Spleen (tissue), 13 donors: ENCODE measurements at regions of chr20 and their contacts with region 1.

Region 1: DNA sequence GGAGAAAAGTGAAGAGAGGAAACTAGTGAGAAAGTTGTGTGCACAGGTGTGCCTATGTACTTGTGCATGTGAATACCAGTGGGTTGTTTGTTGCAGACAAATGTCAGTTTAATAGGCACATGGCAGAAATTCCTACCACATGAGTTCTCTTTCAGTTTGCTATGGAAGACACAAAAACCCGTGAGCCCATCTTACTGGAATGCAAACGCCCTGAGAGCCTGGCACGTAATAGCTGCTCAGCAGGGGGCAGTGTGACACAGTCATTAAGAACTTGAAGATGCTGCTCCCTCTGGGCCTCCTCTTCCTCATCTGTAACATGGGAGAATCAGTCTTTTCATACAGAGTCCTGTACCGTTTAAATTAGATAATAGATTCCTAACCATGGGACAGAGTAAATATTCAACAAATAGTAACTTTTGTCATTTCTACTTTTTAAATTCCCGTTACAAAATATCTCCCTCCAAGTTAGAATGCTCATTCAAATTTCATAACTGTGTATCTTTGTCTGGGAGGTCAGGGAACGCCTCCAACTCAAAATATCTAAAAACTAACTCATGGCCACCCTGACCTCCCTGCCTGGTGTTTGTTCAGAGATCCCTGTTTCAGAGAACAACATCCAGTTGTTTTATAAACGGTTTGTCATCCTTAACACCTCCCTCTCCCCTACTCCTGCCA is 802.9 kb downstream of the MAFB start:
- DNase-seq: no peak
- H3K4me3 ChIP-seq: no peak overlapping the region
- H3K27ac ChIP-seq: peak overlapping the region in 1 of 8 donors; percentile 6
- H3K4me1 ChIP-seq: peaks cover 0 to 14% (median 3%) of the 10 kb centered on the region in 6 donors
- H3K27me3 ChIP-seq: no peaks in the 10 kb centered on the region
- CTCF ChIP-seq: peak in 10 of 11 experiments; percentile 30 to 81 (median 62)
- POLR2A ChIP-seq: no peak

Region 2: GRCh38 chr20:39234520-39235095 is 651.5 kb before region 1 on chr20:
- intact Hi-C with region 1: no loop called
- DNase-seq: no peak
- H3K4me3 ChIP-seq: no peak overlapping the region
- H3K27ac ChIP-seq: no peak overlapping the region
- H3K4me1 ChIP-seq: no peaks in the 10 kb centered on the region
- H3K27me3 ChIP-seq: peaks cover 0 to 6% (median 0%) of the 10 kb centered on the region in 7 donors
- CTCF ChIP-seq: no peak
- POLR2A ChIP-seq: no peak

Region 3: GRCh38 chr20:39758876-39759275 is 127.2 kb before region 1 on chr20:
- intact Hi-C with region 1: no loop called
- DNase-seq: no peak
- H3K4me3 ChIP-seq: no peak overlapping the region
- H3K27ac ChIP-seq: no peak overlapping the region
- H3K4me1 ChIP-seq: no peaks in the 10 kb centered on the region
- H3K27me3 ChIP-seq: no peaks in the 10 kb centered on the region
- CTCF ChIP-seq: no peak
- POLR2A ChIP-seq: no peak

Region 4: DNA sequence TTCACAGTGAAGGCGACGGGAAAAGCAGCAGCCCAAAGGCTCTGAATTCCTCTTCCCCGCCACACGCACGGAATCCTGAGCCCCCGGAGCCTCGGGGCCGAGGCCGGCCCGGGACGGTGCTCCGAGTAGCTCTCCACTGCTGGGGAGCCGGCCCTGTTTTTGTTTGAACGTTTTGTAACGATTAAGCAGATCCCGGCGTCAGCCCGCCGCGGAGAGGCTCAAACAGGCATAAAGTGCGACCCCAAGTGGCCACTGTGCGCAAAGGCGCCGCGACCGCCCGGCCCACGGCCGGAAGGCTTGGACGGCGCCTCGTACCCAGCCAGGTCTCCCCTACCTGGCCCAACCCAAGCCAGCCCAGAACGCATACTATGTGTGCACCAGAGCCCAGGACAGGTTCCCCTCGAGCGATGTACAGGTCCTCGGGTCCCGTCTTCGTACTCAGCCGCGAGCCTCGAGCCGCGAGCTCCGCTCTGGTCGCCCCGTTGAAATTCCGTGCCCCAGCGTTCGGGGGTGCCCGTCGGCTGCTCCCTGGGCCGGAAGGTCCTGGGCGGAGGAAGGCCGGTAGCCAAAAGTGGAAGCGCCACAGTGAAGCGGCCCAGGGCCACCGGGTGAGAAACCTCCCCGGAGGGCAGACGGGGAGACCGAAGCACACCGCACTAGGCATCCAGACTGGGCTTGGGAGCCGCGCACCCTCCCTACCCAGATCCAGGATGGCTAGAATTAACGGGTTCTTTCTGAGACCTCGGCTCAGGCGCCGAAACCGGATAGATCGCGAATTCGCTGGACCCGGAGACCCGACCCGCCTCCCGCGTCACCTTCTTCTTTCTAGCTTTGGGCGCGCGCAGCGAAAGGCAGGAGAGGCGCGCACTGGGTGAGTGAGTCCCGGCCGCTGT is 804.1 kb after region 1 on chr20:
- intact Hi-C with region 1: loop called (anchors 10 kb)
- DNase-seq: peak; percentile 95
- H3K4me3 ChIP-seq: peak overlapping the region; percentile 52 to 87 (median 64)
- H3K27ac ChIP-seq: peak overlapping the region; percentile 38 to 94 (median 90)
- H3K4me1 ChIP-seq: peaks cover 0 to 63% (median 41%) of the 10 kb centered on the region in 6 donors
- H3K27me3 ChIP-seq: peaks cover 0 to 100% (median 62%) of the 10 kb centered on the region in 7 donors
- CTCF ChIP-seq: peak; percentile 77 to 98 (median 90)
- POLR2A ChIP-seq: peak in 1 of 3 donors; percentile 20

Region 5: DNA sequence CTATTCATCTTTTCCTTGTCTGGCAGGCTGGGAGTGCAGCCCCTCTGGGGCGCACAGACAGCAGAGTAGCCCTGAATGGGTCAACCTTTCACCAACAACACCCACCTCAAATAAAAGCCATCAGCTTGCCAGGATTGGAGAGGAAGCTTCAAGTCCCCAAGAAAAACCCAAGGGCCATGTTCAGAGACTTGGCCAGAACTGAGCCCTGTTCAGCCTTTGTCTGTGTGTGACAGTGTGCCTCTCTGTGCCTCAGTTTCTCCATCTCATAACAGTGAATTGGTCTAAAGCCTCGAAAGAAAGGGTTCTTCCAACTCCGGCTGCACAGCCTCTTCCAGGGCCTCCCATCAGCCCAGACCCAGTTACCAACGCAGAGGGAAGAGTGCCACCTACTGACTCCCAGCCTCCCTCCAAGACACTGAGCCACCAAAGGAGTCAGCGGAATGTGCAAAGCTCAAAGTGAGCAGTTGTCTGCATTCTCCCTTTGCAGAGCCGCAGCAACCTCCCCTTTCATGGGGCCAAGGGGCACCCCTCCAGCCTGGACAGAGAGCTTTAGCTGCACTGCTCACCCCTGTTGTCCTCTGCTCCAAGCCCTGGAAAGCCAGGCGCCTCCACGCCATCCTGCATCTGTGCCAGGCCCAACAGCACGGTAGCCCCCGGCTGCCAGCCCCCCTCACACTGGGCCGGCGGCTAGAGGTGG is 1059.8 kb after region 1 on chr20:
- intact Hi-C with region 1: loop called (anchors 10 kb)
- DNase-seq: peak; percentile 80
- H3K4me3 ChIP-seq: no peak overlapping the region
- H3K27ac ChIP-seq: no peak overlapping the region
- H3K4me1 ChIP-seq: peaks cover 0 to 20% (median 10%) of the 10 kb centered on the region in 6 donors
- H3K27me3 ChIP-seq: peaks cover 0 to 10% (median 0%) of the 10 kb centered on the region in 7 donors
- CTCF ChIP-seq: peak in 9 of 11 experiments; percentile 18 to 67 (median 53)
- POLR2A ChIP-seq: no peak

Region 6: GRCh38 chr20:40962730-40963504 is 1076.8 kb after region 1 on chr20:
- intact Hi-C with region 1: loop called (anchors 5 kb)
- DNase-seq: peak; percentile 91
- H3K4me3 ChIP-seq: no peak overlapping the region
- H3K27ac ChIP-seq: no peak overlapping the region
- H3K4me1 ChIP-seq: peaks cover 0 to 23% (median 11%) of the 10 kb centered on the region in 6 donors
- H3K27me3 ChIP-seq: peaks cover 0 to 10% (median 0%) of the 10 kb centered on the region in 7 donors
- CTCF ChIP-seq: peak; percentile 66 to 96 (median 87)
- POLR2A ChIP-seq: no peak